ENCODE measurements at regions of chr7 and their contacts with region 1.

Region 1: DNA sequence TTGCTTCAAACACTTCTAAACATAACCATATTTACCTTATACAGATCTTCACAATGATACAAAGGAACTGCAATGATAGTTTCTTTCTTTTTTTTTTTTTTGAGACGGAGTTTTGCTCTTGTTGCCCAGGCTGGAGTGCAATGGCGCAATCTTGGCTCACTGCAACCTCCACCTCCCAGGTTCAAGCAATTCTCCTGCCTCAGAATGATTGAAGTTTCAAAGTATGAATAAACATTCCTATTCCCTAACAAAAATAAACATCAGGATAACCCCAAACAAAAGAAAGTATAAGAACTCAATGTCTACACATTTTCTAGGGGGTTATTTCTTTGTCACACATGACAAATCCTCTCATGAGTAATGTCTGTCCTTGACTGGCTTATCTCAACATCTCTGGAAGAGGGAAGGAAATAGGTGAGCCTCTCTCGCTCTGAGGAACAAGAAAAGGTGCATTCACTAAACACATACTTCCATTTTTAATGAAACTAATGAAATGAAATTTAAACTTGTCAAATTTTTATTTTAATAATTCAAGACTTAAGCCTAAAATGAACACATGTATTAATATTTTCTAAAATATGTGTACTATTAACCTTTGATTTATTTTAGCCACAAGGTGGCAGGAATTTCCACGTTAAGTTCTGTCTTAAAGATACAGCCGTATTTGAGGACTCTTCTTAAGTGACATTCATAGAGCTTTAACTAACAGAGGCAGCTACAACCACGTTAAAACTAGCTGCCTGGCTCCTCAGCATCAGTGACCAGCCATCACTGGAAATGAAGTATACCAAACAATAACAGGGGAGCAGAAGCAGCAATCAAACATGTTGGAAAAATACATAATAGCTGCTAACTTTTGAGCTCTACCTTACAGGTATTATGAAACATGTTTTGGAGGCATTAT is 58.3 kb downstream of the MALSU1 start:
- DNase-seq: peak; percentile 51 to 99
- H3K4me3 ChIP-seq: peak overlapping the region; percentile 28
- H3K27ac ChIP-seq: peak overlapping the region; percentile 63
- H3K4me1 ChIP-seq: peaks cover 51% of the 10 kb centered on the region
- H3K27me3 ChIP-seq: no peaks in the 10 kb centered on the region
- CTCF ChIP-seq: peak; percentile 83

Region 2: GRCh38 chr7:23298885-23299769 is 58.3 kb before region 1 on chr7 and contains the start of gene MALSU1:
- CTCF ChIA-PET with region 1: no interaction called
- POLR2A ChIA-PET with region 1: no interaction called
- intact Hi-C with region 1: loop called (anchors 2 kb)
- DNase-seq: peak; percentile 95 to 97
- H3K4me3 ChIP-seq: peak within 1 kb of the TSS; percentile 71
- H3K27ac ChIP-seq: peak within 1 kb of the TSS; percentile 85
- H3K4me1 ChIP-seq: peaks cover 27% of the 10 kb centered on the region
- H3K27me3 ChIP-seq: no peaks in the 10 kb centered on the region
- CTCF ChIP-seq: no peak
- total RNA-seq, gene MALSU1: 105 and 133 TPM in 2 replicates

Region 3: GRCh38 chr7:23334482-23335056 is 22.9 kb before region 1 on chr7:
- CTCF ChIA-PET with region 1: no interaction called
- POLR2A ChIA-PET with region 1: no interaction called
- intact Hi-C with region 1: loop called (anchors 1 kb)
- DNase-seq: peak; percentile 80 to 100
- H3K4me3 ChIP-seq: no peak overlapping the region
- H3K27ac ChIP-seq: peak overlapping the region; percentile 60
- H3K4me1 ChIP-seq: peaks cover 52% of the 10 kb centered on the region
- H3K27me3 ChIP-seq: no peaks in the 10 kb centered on the region
- CTCF ChIP-seq: no peak

Region 4: GRCh38 chr7:23369695-23370404 is 12.4 kb after region 1 on chr7:
- CTCF ChIA-PET with region 1: interaction called, 4 read pairs
- POLR2A ChIA-PET with region 1: interaction called, 13 read pairs
- intact Hi-C with region 1: no loop called
- DNase-seq: no peak
- H3K4me3 ChIP-seq: no peak overlapping the region
- H3K27ac ChIP-seq: no peak overlapping the region
- H3K4me1 ChIP-seq: no peaks in the 10 kb centered on the region
- H3K27me3 ChIP-seq: no peaks in the 10 kb centered on the region
- CTCF ChIP-seq: no peak

Region 5: DNA sequence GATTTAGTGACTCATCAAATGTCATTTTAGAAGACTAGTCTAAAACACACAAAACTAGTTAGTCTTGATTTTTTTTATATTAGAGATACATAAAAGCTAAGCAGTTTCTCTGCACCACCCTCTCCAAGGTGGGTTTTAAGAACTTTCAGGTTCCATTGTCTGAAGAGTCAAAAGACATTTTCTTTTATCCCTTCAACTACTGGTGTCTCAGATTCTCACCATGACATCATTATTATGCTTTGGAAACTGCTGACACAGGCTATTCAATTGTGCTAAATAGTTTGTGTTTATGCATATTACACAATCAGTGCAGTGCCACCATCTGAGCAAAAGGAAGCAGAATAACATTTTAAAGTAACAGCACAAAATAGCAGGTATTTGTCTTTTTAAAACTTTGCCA is 60.6 kb after region 1 on chr7:
- CTCF ChIA-PET with region 1: no interaction called
- POLR2A ChIA-PET with region 1: no interaction called
- intact Hi-C with region 1: loop called (anchors 5 kb)
- DNase-seq: peak; percentile 5 to 82
- H3K4me3 ChIP-seq: peak overlapping the region; percentile 2; the same call in 1 of the 2 replicates
- H3K27ac ChIP-seq: peak overlapping the region; percentile 59
- H3K4me1 ChIP-seq: peaks cover 40% of the 10 kb centered on the region
- H3K27me3 ChIP-seq: no peaks in the 10 kb centered on the region
- CTCF ChIP-seq: no peak

Region 6: GRCh38 chr7:23531794-23532489 is 174.5 kb after region 1 on chr7 and contains the start of gene TRA2A:
- CTCF ChIA-PET with region 1: no interaction called
- POLR2A ChIA-PET with region 1: interaction called, 4 read pairs
- intact Hi-C with region 1: loop called (anchors 5 kb)
- DNase-seq: peak; percentile 91 to 98
- H3K4me3 ChIP-seq: peak within 1 kb of the TSS; percentile 89
- H3K27ac ChIP-seq: peak within 1 kb of the TSS; percentile 89
- H3K4me1 ChIP-seq: peaks cover 36% of the 10 kb centered on the region
- H3K27me3 ChIP-seq: no peaks in the 10 kb centered on the region
- CTCF ChIP-seq: no peak
- total RNA-seq, gene TRA2A: 77.0 and 112 TPM in 2 replicates